Mammary epithelial cell (primary cell): ENCODE measurements at regions of chr12 and their contacts with region 1.

Region 1: GRCh38 chr12:130668286-130669204 is 47.6 kb downstream of the RIMBP2 start:
- DNase-seq: no peak
- H3K4me3 ChIP-seq: no peak overlapping the region
- H3K27ac ChIP-seq: no peak overlapping the region
- H3K4me1 ChIP-seq: no peaks in the 10 kb centered on the region
- H3K27me3 ChIP-seq: no peaks in the 10 kb centered on the region
- CTCF ChIP-seq: no peak

Region 2: DNA sequence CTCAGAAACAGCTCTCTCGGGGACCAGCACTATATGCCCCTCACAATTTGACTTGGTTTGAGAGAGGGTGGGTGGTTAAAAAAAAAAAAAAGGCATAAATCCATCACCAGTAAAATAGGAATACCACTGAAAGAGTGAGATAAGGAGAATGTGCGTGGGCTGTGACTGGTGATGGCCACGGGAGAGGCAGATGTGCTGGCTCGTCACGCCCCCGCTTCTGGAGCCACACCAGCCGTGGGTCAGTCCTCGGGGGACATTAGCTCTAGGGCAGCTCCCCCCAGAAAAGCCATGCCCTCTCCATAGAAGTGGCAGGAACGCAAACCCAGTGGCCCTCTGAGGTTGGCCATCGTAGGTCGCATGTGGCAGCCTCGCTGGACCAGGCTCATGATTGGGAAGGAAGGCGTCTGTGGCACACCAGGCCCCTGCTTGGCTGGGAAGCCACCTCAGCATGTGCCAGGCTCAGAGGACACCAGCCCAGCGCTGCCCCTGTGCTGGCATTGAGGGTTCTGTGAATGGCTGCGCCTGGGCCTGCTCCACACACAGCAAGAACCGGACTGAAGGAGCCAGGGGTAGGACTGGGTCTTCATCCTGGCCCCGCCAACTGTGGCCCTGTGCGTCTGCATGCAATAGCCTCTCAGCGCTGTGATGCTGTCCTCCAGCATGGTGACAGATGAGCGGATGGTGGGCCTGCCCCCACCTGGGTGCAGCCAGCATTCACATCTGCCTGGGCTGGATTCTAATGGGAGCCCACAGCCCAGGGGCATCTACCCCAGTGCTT is 220.3 kb before region 1 on chr12:
- CTCF ChIA-PET with region 1: no interaction called
- dilution Hi-C with region 1: loop called (anchors 5 kb)
- in situ Hi-C with region 1: no loop called
- intact Hi-C with region 1: no loop called
- DNase-seq: no peak
- H3K4me3 ChIP-seq: no peak overlapping the region
- H3K27ac ChIP-seq: no peak overlapping the region
- H3K4me1 ChIP-seq: no peaks in the 10 kb centered on the region
- H3K27me3 ChIP-seq: no peaks in the 10 kb centered on the region
- CTCF ChIP-seq: no peak

Region 3: DNA sequence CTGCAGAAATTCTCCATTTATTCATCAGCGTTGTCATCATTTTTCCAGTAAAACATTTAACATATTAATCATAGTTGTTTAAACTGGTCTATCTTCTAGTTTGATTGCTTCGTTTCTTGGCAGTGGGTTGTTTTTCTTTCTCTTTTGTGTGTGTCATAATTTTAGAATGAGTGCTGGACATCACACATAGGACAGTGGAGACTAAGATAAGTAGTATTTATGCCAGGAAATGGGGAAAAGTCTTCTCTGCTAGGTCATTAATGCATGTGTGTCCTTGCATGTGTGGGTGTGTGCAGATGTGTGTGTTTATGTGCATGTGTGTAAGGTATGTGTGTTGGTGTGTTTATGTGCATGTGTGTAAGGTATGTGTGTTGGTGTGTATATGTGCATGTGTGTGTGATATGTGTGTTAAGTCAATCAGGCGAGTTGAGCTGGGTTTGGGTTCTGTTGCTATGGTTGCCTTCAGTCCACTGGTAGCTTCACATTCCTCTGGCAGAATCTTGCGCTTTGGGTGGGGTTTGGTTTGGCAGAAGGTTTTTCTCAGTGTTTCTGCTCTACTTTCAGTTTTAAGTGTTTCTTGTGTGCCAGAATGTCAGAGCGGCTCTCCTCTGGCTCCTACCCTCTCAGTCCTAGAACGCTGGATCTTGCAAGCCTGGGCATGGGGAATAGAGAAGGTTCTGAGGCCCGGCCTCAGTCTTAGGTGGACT is 277.4 kb after region 1 on chr12:
- CTCF ChIA-PET with region 1: no interaction called
- dilution Hi-C with region 1: no loop called
- in situ Hi-C with region 1: no loop called
- intact Hi-C with region 1: no loop called
- DNase-seq: no peak
- H3K4me3 ChIP-seq: no peak overlapping the region
- H3K27ac ChIP-seq: no peak overlapping the region
- H3K4me1 ChIP-seq: no peaks in the 10 kb centered on the region
- H3K27me3 ChIP-seq: no peaks in the 10 kb centered on the region
- CTCF ChIP-seq: no peak